Aorta (tissue), 5 donors: ENCODE measurements at regions of chr1 and their contacts with region 1.

Region 1: GRCh38 chr1:209395169-209395568 is 188.3 kb upstream of the CAMK1G start:
- DNase-seq: no peak
- ATAC-seq: no peak
- H3K4me3 ChIP-seq: no peak overlapping the region
- H3K27ac ChIP-seq: no peak overlapping the region
- H3K4me1 ChIP-seq: no peaks in the 10 kb centered on the region
- H3K27me3 ChIP-seq: peaks cover 0 to 4% of the 10 kb centered on the region in 2 donors

Region 2: DNA sequence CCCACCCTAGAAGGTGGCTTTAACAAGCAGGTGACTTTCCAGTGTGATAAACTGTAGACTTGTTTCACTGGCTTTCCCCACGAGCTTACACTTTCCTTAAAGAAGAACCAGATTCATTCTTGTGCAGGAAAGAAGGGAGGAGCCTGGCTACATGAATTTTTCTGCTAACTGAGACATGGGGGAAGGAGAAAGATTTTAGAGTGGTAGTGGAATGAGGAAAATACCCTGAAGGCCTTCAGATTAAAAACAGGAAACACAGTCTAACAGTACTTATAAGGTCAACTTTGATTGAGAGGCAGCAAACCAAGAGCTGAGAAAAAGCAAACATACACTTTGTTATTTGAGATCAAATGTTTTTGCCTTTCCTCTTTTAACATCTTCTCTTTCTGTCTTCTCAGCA is 510.1 kb before region 1 on chr1:
- intact Hi-C with region 1: no loop called
- DNase-seq: no peak
- ATAC-seq: no peak
- H3K4me3 ChIP-seq: no peak overlapping the region
- H3K27ac ChIP-seq: no peak overlapping the region
- H3K4me1 ChIP-seq: peaks cover 4 to 7% of the 10 kb centered on the region in 2 donors
- H3K27me3 ChIP-seq: no peaks in the 10 kb centered on the region

Region 3: DNA sequence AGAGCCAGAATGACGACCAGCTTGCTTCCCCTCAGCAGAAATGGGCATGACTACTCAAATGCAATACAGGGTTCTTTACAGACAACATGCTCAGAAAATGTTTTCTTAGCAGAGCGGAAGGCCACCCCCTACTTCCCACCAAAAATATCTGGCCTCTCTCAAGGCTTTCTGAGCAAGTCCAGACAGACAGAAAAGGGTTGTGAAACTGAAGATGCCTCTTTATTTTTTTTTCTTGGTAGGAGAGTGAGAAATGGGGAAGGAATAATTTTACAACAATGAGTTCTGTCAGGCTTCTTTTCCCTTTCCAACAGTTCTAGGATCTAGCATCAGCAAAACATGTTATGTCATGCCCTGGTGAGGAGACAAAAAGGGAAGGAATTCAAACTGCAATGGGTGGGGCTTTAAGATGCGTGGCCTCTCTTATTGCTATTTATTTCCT is 16.3 kb after region 1 on chr1:
- intact Hi-C with region 1: loop called in 1 of 2 experiments (anchors 2 kb)
- DNase-seq: no peak
- ATAC-seq: peak; percentile 66
- H3K4me3 ChIP-seq: no peak overlapping the region
- H3K27ac ChIP-seq: no peak overlapping the region
- H3K4me1 ChIP-seq: no peaks in the 10 kb centered on the region
- H3K27me3 ChIP-seq: no peaks in the 10 kb centered on the region

Region 4: DNA sequence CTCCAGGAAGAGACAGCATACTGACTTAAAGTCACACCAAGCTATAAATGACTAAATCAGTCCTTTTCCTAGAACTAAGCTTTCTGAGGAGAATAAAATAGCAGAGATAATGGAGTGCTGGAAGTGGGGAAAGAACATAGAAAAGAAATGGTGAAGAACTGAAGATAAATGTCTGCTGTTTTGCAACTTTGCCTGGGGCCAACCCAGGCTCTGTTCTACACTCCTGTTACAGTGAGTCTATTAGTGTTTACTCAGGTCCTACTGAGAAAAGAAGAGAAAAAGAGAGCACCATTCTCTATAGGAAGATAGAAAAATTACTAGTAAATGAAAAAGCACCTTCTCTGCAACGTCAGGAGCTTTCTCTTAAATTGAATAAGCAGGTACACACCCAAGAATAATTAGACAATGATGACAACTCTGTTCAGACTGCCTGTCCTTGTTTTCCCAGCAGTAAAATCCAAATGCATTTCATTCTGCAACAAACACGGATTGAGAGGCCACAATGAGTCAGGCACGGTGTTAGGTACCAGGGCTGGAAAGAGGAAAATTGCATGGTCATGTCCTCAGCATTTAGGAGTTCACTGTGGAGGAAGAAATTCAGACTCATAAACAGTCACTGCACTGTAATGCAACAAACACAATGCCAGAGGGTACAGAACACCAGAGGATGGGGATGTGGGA is 48.9 kb after region 1 on chr1:
- intact Hi-C with region 1: no loop called
- DNase-seq: no peak
- ATAC-seq: no peak
- H3K4me3 ChIP-seq: no peak overlapping the region
- H3K27ac ChIP-seq: no peak overlapping the region
- H3K4me1 ChIP-seq: no peaks in the 10 kb centered on the region
- H3K27me3 ChIP-seq: no peaks in the 10 kb centered on the region

Region 5: GRCh38 chr1:209549443-209550205 is 154.5 kb after region 1 on chr1:
- intact Hi-C with region 1: no loop called
- DNase-seq: no peak
- ATAC-seq: no peak
- H3K4me3 ChIP-seq: no peak overlapping the region
- H3K27ac ChIP-seq: no peak overlapping the region
- H3K4me1 ChIP-seq: no peaks in the 10 kb centered on the region
- H3K27me3 ChIP-seq: no peaks in the 10 kb centered on the region